Adrenal gland (tissue), 19 donors: ENCODE measurements at regions of chr9 and their contacts with region 1.

Region 1: GRCh38 chr9:136790927-136791641 is at the start of gene TMEM141:
- DNase-seq: peak; percentile 100
- H3K4me3 ChIP-seq: peak within 1 kb of the TSS; percentile 16 to 89 (median 74)
- H3K27ac ChIP-seq: peak within 1 kb of the TSS in 4 of 5 donors; percentile 63 to 93 (median 82)
- H3K4me1 ChIP-seq: peaks cover 5 to 18% of the 10 kb centered on the region in 2 donors
- H3K27me3 ChIP-seq: no peaks in the 10 kb centered on the region
- CTCF ChIP-seq: no peak
- POLR2A ChIP-seq: peak in 1 of 2 donors; percentile 59
- total RNA-seq, gene TMEM141: 31.3 to 78.7 (median 58.1) TPM

Region 2: GRCh38 chr9:136605988-136606660 is 185.0 kb before region 1 on chr9:
- intact Hi-C with region 1: no loop called
- DNase-seq: no peak
- H3K4me3 ChIP-seq: no peak overlapping the region
- H3K27ac ChIP-seq: no peak overlapping the region
- H3K4me1 ChIP-seq: no peaks in the 10 kb centered on the region
- H3K27me3 ChIP-seq: no peaks in the 10 kb centered on the region
- CTCF ChIP-seq: no peak
- POLR2A ChIP-seq: no peak

Region 3: GRCh38 chr9:136748666-136749611 is 42.1 kb before region 1 on chr9:
- intact Hi-C with region 1: no loop called
- DNase-seq: peak in 5 of 7 donors; percentile 54 to 68 (median 64)
- H3K4me3 ChIP-seq: no peak overlapping the region
- H3K27ac ChIP-seq: no peak overlapping the region
- H3K4me1 ChIP-seq: peaks cover 5 to 9% of the 10 kb centered on the region in 2 donors
- H3K27me3 ChIP-seq: no peaks in the 10 kb centered on the region
- CTCF ChIP-seq: no peak
- POLR2A ChIP-seq: no peak

Region 4: GRCh38 chr9:136849038-136849959 is 58.2 kb after region 1 on chr9 and contains the start of gene PHPT1:
- intact Hi-C with region 1: loop called in 1 of 2 experiments (anchors 10 kb)
- DNase-seq: peak; percentile 98 to 99 (median 99)
- H3K4me3 ChIP-seq: peak within 1 kb of the TSS; percentile 36 to 83 (median 48)
- H3K27ac ChIP-seq: peak within 1 kb of the TSS; percentile 86 to 98 (median 91)
- H3K4me1 ChIP-seq: peaks cover 14 to 25% of the 10 kb centered on the region in 2 donors
- H3K27me3 ChIP-seq: no peaks in the 10 kb centered on the region
- CTCF ChIP-seq: no peak
- POLR2A ChIP-seq: peak; percentile 75 to 81
- total RNA-seq, gene PHPT1: 73.9 to 267 (median 171) TPM

Region 5: DNA sequence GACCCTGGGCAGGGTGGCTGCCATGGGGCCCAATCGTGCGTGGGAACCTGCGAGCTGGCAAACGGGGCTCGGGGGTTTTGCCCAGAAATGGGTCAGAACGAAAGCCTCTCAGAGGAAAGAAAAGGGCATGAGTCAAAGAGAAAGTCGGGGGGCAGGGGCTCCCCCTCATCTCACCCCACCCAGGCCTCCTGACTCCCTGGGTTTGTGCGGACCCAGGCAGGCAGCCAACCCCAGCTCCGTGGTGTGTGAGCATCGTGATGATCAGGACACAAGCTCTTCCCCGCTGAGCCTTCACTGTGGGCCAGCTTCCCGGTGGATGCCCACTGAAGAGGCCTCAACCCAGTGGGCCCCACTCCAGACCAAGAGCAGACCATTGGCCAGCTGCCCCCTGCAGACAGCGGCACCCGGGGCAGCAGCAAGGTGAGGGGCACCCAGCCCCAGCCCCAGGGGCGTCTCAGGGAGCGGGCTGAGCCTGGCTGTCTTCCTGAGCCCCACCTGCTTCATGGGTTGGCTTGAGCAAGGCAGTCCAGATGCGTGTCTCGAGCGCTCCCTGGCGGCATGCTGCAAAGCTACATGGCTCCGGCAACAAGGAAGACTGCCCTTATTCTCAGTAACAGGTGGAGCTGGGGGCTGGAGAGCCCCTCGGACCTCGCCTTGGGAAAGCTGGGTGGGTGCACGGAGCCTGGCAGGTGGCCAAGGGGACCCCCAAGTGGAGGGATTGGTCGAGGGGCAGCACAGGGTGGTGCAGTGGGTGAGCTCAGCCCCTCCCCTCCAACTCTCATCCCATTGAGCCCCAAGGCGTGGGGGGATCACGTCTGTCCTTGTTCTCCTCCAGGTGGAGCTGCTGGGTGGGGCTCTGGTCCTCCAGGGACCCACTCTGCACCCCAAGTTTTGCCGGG is 244.0 kb after region 1 on chr9:
- intact Hi-C with region 1: loop called (anchors 5 kb)
- DNase-seq: peak; percentile 81 to 93 (median 83)
- H3K4me3 ChIP-seq: no peak overlapping the region
- H3K27ac ChIP-seq: peak overlapping the region in 2 of 5 donors; percentile 34 to 35
- H3K4me1 ChIP-seq: peaks cover 0 to 16% of the 10 kb centered on the region in 2 donors
- H3K27me3 ChIP-seq: no peaks in the 10 kb centered on the region
- CTCF ChIP-seq: peak; percentile 82 to 93 (median 92)
- POLR2A ChIP-seq: no peak

Region 6: GRCh38 chr9:137236238-137236935 is 445.3 kb after region 1 on chr9:
- intact Hi-C with region 1: loop called in 1 of 2 experiments (anchors 10 kb)
- DNase-seq: peak; percentile 82 to 93 (median 88)
- H3K4me3 ChIP-seq: no peak overlapping the region
- H3K27ac ChIP-seq: no peak overlapping the region
- H3K4me1 ChIP-seq: peaks cover 7 to 23% of the 10 kb centered on the region in 2 donors
- H3K27me3 ChIP-seq: peaks cover 22% of the 10 kb centered on the region
- CTCF ChIP-seq: peak; percentile 97 to 100 (median 98)
- POLR2A ChIP-seq: no peak